OCI-LY7 (cell line): ENCODE measurements at regions of chr17 and their contacts with region 1.

Region 1: DNA sequence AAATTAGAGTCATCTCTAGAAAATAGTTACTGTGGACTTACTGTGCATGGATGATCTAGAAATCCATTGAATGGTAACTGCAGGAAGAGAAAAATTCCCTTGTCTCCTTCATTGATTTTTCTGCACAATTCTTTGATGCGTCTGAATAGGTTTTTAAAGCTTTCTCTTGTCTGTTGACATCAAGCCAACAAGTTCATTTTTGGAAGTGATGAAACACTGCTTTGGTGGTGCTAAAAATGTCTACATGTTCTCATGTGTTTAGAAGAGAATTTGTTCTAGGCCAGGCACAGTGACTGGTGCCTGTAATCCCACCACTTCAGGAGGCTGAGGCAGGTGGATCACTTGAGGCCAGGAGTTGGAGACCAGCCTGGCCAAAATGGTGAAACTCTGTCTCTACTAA is 57.1 kb upstream of the AXIN2 start:
- DNase-seq: no peak
- H3K4me3 ChIP-seq: no peak overlapping the region
- H3K27ac ChIP-seq: no peak overlapping the region
- H3K4me1 ChIP-seq: no peaks in the 10 kb centered on the region
- CTCF ChIP-seq: no peak

Region 2: DNA sequence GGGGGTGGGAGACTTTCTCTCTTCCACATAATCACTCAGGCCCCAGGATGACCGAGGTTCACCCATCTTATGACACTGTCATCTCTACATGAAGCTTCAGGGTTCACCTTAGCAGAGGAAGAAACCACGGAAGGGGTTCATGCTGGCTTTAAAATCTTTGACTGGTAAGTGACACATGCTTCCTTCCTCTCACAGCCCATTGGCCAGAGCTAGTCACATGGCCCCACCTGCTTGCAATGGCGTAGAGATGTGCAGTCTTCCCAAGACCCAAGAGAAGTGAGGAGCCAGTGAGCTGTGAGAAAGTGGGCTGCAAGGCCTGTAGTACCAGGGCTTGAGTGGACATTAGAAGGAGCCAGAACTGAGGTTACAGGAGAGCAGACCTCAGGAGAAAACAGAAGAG is 237.4 kb before region 1 on chr17:
- CTCF ChIA-PET with region 1: no interaction called
- POLR2A ChIA-PET with region 1: no interaction called
- intact Hi-C with region 1: loop called (anchors 5 kb)
- DNase-seq: no peak
- H3K4me3 ChIP-seq: no peak overlapping the region
- H3K27ac ChIP-seq: no peak overlapping the region
- H3K4me1 ChIP-seq: no peaks in the 10 kb centered on the region
- CTCF ChIP-seq: no peak

Region 3: GRCh38 chr17:65604070-65604469 is 14.4 kb before region 1 on chr17:
- CTCF ChIA-PET with region 1: no interaction called
- POLR2A ChIA-PET with region 1: no interaction called
- intact Hi-C with region 1: no loop called
- DNase-seq: no peak
- H3K4me3 ChIP-seq: no peak overlapping the region
- H3K27ac ChIP-seq: no peak overlapping the region
- H3K4me1 ChIP-seq: no peaks in the 10 kb centered on the region
- CTCF ChIP-seq: no peak